Naive thymus-derived CD4-positive, alpha-beta T cell (primary cell): ENCODE measurements at regions of chr17 and their contacts with region 1.

Region 1: DNA sequence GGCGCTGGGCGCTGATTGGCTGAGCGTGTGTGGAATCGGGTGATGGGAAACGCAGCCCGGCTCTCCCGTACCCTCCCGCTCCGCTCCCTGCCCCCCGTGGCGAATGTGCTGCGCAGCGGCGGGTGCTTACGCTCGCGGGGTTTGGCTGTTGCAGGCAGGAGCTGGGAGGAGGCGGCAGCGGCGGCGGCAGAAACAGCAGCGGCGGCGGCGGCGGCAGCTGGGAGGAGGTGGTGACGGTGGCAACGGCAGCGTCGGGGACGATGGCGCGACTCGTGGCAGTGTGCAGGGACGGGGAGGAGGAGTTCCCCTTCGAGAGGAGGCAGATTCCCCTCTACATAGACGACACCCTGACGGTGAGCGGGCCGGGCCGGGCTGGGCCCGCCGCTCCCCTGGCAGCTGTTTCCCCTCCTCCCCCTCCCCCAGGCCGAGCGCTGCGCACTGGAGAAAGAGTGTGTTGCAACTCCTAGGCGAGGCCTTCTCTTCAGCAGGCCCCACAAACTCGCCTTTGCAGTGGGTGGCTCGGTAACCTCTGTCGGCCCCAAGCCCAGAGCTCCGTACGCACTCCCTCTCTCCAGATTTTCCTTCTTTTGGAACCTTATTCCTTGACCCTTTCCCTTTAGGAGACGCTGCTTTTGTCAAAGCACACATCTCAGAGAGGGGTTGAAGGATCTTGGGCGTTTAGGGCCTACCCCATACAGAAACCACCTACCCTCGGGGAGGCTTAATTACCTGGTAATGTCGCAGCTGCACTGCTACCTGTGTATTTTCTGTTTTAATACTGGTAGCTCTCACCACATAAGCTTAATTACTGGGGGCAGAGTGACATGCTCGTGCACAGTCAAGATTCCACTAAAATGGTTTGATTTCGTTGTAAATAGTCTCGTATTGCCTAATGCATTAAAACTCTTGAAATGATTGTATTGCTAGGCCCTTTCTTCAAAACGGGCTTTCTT is 1.0 kb downstream of the GGNBP2 start:
- DNase-seq: peak; percentile 95 to 98 (median 98)
- ATAC-seq: peak; percentile 87
- H3K4me3 ChIP-seq: peak overlapping the region; percentile 93
- H3K4me3 Mint-ChIP-seq: peak overlapping the region; percentile 87 to 97 (median 94)
- H3K27ac ChIP-seq: peak overlapping the region; percentile 94
- H3K27ac Mint-ChIP-seq: peak overlapping the region; percentile 90 to 96 (median 94)
- H3K4me1 ChIP-seq: peaks cover 40 to 44% of the 10 kb centered on the region in 2 donors
- H3K4me1 Mint-ChIP-seq: peaks cover 13 to 57% (median 44%) of the 10 kb centered on the region in 7 donors
- H3K27me3 ChIP-seq: no peaks in the 10 kb centered on the region
- H3K27me3 Mint-ChIP-seq: no peaks in the 10 kb centered on the region

Region 2: DNA sequence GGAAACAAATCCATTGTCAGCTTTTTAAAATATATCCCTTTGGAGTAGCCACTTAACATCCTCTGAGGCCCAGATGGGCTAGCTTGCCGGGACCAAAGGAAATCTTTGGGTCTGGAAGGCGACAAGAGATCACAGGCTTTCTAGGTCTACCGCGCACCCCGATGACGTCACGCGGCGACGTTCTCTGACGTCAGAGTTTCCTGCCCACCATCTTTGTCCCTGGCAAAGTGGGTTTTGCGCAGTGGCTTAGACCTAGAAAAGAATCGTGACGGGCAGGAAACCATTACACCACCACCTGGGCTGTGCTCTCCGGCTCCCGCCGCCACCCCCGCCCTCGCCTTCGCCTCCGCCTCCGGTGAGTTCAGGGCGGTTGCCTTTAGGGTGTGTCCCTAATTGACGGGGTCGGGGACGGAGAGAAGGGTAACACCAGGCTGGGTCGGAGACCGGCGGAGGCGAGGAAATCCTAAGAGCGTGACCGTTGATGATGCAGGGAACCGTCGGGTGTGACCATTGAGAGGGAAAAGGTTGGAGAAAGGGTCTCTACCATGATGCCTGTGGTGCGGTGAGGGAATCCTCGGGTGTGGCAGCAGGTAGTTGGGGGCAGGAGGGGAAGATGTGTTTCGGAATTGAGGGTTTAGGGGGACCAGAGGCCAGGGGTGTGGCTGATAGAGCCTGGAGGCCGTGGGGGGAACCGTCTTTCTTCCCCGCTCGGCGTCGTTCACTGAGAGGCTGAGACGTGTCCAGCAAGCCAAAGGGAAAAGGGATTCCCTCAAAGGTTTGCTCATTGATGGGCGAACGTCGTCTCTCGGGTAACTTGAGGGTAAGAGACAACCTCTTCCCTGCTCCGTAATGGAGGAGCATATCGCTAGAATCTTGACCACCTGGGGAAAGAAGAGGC is 958.4 kb before region 1 on chr17 and contains the start of gene AP2B1:
- CTCF ChIA-PET with region 1: no interaction called
- POLR2A ChIA-PET with region 1: no interaction called
- intact Hi-C with region 1: loop called in 1 of 2 experiments (anchors 10 kb)
- DNase-seq: peak; percentile 96 to 100 (median 98)
- ATAC-seq: peak; percentile 99
- H3K4me3 ChIP-seq: peak within 1 kb of the TSS; percentile 85
- H3K4me3 Mint-ChIP-seq: peak within 1 kb of the TSS; percentile 92 to 99 (median 97)
- H3K27ac ChIP-seq: peak within 1 kb of the TSS; percentile 91
- H3K27ac Mint-ChIP-seq: peak within 1 kb of the TSS; percentile 95 to 99 (median 99)
- H3K4me1 ChIP-seq: peaks cover 13 to 17% of the 10 kb centered on the region in 2 donors
- H3K4me1 Mint-ChIP-seq: peaks cover 28 to 45% (median 38%) of the 10 kb centered on the region in 7 donors
- H3K27me3 ChIP-seq: no peaks in the 10 kb centered on the region
- H3K27me3 Mint-ChIP-seq: peaks cover 0 to 12% (median 0%) of the 10 kb centered on the region in 5 donors
- total RNA-seq, gene AP2B1: 84.7 to 197 (median 136) TPM

Region 3: DNA sequence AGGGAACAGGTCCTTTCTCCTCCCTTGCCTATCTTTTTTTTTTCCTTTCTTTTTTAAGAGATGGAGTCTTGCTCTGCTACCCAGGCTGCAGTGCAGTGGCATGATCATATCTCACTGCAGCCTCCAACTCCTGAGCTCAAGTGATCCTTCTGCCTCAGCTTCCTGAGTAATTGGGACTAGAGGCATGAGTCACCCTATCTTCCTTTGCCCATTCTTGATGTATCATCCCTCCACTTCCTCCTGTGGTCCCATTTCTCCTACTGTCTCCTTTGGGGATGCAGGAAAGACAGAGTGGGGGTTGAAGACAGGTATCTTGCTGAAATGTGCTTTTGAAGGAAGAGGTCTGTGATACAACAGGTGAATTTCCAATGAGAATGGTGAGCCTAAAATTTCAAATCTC is 16.6 kb before region 1 on chr17:
- CTCF ChIA-PET with region 1: interaction called, 6 read pairs
- POLR2A ChIA-PET with region 1: interaction called, 130 read pairs
- intact Hi-C with region 1: loop called in 1 of 2 experiments (anchors 2 kb)
- DNase-seq: no peak
- ATAC-seq: no peak
- H3K4me3 ChIP-seq: no peak overlapping the region
- H3K4me3 Mint-ChIP-seq: no peak overlapping the region
- H3K27ac ChIP-seq: no peak overlapping the region
- H3K27ac Mint-ChIP-seq: no peak overlapping the region
- H3K4me1 ChIP-seq: no peaks in the 10 kb centered on the region
- H3K4me1 Mint-ChIP-seq: peaks cover 4 to 40% (median 8%) of the 10 kb centered on the region in 7 donors
- H3K27me3 ChIP-seq: no peaks in the 10 kb centered on the region
- H3K27me3 Mint-ChIP-seq: no peaks in the 10 kb centered on the region

Region 4: DNA sequence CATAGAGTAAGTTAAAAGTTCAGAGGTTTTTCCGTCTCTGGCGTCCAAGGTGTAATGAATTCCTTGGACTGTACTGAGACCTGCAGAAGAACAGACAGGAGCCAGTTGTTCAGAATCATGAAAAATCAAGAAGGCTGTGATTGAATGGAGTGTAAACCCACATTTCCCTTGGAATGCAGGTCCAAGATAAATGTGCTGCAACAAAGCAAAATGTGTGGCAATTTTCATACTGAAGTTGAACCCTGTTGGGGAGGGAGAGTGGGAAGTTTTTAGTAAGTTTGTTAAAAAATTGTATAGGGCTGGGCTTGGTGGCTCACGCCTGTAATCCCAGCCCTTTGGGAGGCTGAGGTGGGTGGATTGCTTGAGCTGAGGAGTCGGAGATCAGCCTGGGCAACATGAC is 20.3 kb after region 1 on chr17:
- CTCF ChIA-PET with region 1: interaction called, 3 read pairs
- POLR2A ChIA-PET with region 1: interaction called, 11 read pairs
- intact Hi-C with region 1: no loop called
- DNase-seq: no peak
- ATAC-seq: no peak
- H3K4me3 ChIP-seq: no peak overlapping the region
- H3K4me3 Mint-ChIP-seq: no peak overlapping the region
- H3K27ac ChIP-seq: no peak overlapping the region
- H3K27ac Mint-ChIP-seq: peak overlapping the region in 4 of 9 donors; percentile 11 to 56 (median 21)
- H3K4me1 ChIP-seq: peaks cover 4 to 7% of the 10 kb centered on the region in 2 donors
- H3K4me1 Mint-ChIP-seq: peaks cover 12 to 37% (median 27%) of the 10 kb centered on the region in 7 donors
- H3K27me3 ChIP-seq: no peaks in the 10 kb centered on the region
- H3K27me3 Mint-ChIP-seq: no peaks in the 10 kb centered on the region

Region 5: DNA sequence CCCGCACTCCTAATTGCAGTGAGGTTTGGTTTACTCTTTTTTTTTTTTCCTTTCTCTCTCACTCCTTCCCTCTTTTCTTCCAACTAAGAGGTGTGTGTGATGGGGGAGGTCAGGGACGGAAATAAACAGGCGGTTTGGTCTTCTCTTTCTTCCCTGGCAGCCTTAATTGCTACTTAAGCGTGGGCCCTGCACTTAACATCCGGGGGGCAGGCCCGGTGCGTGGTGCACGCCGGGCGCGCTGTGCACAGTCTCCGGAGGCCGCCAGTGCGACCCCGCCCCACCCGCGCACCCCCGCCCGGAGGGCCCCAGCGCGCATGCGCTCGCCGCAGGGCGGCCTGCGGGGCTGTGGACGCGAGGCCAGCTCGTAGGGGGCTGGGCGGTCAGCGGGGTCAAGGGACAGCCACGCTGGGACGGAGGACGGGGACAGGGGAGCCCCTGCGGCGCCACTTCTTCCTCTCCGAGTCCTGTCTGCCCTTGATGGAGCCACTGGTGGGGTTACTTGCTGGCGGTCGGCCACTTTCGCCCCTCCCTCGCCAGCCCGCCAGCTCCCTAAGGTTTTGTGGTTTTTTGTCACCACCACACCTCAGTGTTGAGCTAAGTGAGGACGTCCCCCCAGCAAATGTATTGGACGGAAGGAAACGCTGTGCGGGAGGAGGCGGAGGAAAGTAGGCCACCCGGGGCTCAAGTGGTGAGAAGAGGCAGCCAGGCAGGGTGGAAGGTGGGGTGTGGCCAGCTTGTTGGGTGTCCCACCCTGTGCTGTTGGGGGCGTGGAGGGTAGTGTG is 176.6 kb after region 1 on chr17:
- CTCF ChIA-PET with region 1: no interaction called
- POLR2A ChIA-PET with region 1: no interaction called
- intact Hi-C with region 1: loop called in 1 of 2 experiments (anchors 2 kb)
- DNase-seq: peak; percentile 68 to 91 (median 84)
- ATAC-seq: peak; percentile 97
- H3K4me3 ChIP-seq: peak overlapping the region; percentile 72
- H3K4me3 Mint-ChIP-seq: peak overlapping the region; percentile 67 to 90 (median 86)
- H3K27ac ChIP-seq: peak overlapping the region; percentile 80
- H3K27ac Mint-ChIP-seq: peak overlapping the region; percentile 90 to 99 (median 98)
- H3K4me1 ChIP-seq: peaks cover 21 to 49% of the 10 kb centered on the region in 2 donors
- H3K4me1 Mint-ChIP-seq: peaks cover 32 to 64% (median 58%) of the 10 kb centered on the region in 7 donors
- H3K27me3 ChIP-seq: no peaks in the 10 kb centered on the region
- H3K27me3 Mint-ChIP-seq: no peaks in the 10 kb centered on the region

Region 6: GRCh38 chr17:37358830-37359681 is 813.3 kb after region 1 on chr17:
- CTCF ChIA-PET with region 1: no interaction called
- POLR2A ChIA-PET with region 1: no interaction called
- intact Hi-C with region 1: loop called in 1 of 2 experiments (anchors 5 kb)
- DNase-seq: peak; percentile 81 to 95 (median 85)
- ATAC-seq: peak; percentile 97
- H3K4me3 ChIP-seq: peak overlapping the region; percentile 80
- H3K4me3 Mint-ChIP-seq: peak overlapping the region; percentile 77 to 96 (median 91)
- H3K27ac ChIP-seq: peak overlapping the region; percentile 67
- H3K27ac Mint-ChIP-seq: peak overlapping the region in 7 of 9 donors; percentile 80 to 92 (median 87)
- H3K4me1 ChIP-seq: peaks cover 6 to 14% of the 10 kb centered on the region in 2 donors
- H3K4me1 Mint-ChIP-seq: peaks cover 11 to 28% (median 23%) of the 10 kb centered on the region in 7 donors
- H3K27me3 ChIP-seq: no peaks in the 10 kb centered on the region
- H3K27me3 Mint-ChIP-seq: no peaks in the 10 kb centered on the region